Activated CD4-positive, alpha-beta T cell treated with anti-CD3 and anti-CD28 coated beads for 36 hours (primary cell): ENCODE measurements at regions of chr3 and their contacts with region 1.

Region 1: GRCh38 chr3:29280404-29281093 is at the start of gene RBMS3:
- DNase-seq: peak; percentile 48
- ATAC-seq: peak; percentile 14
- H3K4me3 Mint-ChIP-seq: peak within 1 kb of the TSS; percentile 70
- H3K27ac Mint-ChIP-seq: peak within 1 kb of the TSS; percentile 73
- H3K4me1 Mint-ChIP-seq: peaks cover 35% of the 10 kb centered on the region
- H3K27me3 Mint-ChIP-seq: peaks cover 13% of the 10 kb centered on the region
- total RNA-seq, gene RBMS3: 1.5 to 2.0 TPM

Region 2: GRCh38 chr3:28935146-28935545 is 345.4 kb before region 1 on chr3:
- CTCF ChIA-PET with region 1: no interaction called
- POLR2A ChIA-PET with region 1: interaction called, 3 read pairs
- intact Hi-C with region 1: loop called in 1 of 2 experiments (anchors 5 kb)
- DNase-seq: peak; percentile 13
- ATAC-seq: peak; percentile 73
- H3K4me3 Mint-ChIP-seq: no peak overlapping the region
- H3K27ac Mint-ChIP-seq: peak overlapping the region; percentile 59
- H3K4me1 Mint-ChIP-seq: peaks cover 25% of the 10 kb centered on the region
- H3K27me3 Mint-ChIP-seq: peaks cover 5% of the 10 kb centered on the region

Region 3: GRCh38 chr3:29440413-29441305 is 160.1 kb after region 1 on chr3:
- CTCF ChIA-PET with region 1: no interaction called
- POLR2A ChIA-PET with region 1: no interaction called
- intact Hi-C with region 1: no loop called
- DNase-seq: no peak
- ATAC-seq: peak; percentile 26
- H3K4me3 Mint-ChIP-seq: no peak overlapping the region
- H3K27ac Mint-ChIP-seq: no peak overlapping the region
- H3K4me1 Mint-ChIP-seq: peaks cover 7% of the 10 kb centered on the region
- H3K27me3 Mint-ChIP-seq: peaks cover 8% of the 10 kb centered on the region